ENCODE measurements at regions of chr19 and their contacts with region 1.

Region 1: GRCh38 chr19:50368649-50369570 is 3.5 kb upstream of the NAPSA start:
- DNase-seq: peak; percentile 92
- ATAC-seq: peak; percentile 95

Region 2: DNA sequence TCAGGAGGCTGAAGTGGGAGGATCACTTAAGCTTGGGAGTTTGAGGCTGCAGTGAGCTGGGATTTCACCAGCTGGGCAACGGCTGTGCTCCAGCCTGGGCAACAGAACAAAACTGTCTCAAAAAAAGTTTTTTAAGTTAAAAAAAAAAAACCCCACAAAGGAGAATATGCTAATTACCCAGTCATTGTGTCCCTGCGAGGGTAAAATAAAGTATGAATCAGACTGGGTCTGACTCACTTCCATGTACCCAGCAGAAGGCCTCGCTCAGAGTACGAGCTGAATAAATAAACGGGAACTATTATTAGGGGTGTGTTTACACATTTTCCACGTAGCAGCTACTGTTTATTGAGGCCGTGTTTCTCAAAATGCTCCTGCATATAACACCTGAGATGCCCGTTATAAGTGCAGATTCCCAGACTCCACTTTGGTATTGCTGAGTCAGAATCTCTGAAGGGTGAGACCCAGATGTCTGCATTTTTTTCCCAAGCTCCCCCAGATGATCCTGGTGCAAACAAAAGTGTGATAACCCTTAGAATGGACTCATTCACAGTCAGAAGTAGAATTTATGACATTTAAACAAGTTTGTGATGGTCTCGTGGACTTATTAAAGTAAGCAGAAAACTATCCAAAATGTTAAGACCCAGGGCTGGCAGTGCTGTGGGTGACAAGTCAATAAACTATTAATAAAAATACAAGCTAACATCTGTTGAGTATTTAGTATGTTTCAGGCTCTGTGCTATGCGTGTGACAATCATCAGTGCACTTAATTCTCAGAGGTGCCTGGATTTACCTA is 67.9 kb before region 1 on chr19:
- intact Hi-C with region 1: no loop called
- DNase-seq: no peak
- ATAC-seq: no peak

Region 3: DNA sequence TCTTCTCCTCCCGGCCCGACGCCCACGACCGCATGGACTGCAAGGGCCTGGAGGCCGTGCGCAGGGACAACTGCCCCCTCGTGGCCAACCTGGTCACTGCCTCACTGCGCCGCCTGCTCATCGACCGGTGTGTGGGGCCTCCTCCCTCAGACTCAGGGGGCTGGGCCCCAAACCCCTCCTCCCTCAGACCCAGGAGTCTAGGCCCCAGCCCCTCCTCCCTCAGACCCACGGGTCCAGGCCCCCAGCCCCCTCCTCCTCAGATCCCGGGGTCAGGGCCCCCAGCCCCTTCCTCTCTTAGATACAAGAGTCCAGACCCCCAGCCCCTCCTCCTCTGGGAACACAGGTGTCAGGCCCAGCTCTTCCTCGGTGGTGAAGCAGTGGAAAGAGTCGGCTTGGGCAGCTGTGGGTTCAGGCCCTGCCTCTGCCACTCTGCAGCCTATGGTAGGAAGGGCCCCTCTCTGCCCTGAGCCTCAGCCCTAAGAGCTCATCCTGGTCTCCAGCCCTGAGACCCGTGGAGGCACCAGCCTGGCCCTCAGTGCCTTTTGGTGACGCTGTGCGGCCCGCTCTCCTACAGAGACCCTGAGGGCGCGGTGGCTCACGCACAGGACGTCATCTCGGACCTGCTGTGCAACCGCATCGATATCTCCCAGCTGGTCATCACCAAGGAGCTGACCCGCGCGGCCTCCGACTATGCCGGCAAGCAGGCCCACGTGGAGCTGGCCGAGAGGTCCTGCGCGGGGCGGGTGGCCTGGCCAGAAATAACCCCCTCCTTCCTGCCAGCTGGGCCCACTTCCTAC is 46.2 kb after region 1 on chr19:
- intact Hi-C with region 1: loop called (anchors 2 kb)
- DNase-seq: peak; percentile 90
- ATAC-seq: peak; percentile 65

Region 4: DNA sequence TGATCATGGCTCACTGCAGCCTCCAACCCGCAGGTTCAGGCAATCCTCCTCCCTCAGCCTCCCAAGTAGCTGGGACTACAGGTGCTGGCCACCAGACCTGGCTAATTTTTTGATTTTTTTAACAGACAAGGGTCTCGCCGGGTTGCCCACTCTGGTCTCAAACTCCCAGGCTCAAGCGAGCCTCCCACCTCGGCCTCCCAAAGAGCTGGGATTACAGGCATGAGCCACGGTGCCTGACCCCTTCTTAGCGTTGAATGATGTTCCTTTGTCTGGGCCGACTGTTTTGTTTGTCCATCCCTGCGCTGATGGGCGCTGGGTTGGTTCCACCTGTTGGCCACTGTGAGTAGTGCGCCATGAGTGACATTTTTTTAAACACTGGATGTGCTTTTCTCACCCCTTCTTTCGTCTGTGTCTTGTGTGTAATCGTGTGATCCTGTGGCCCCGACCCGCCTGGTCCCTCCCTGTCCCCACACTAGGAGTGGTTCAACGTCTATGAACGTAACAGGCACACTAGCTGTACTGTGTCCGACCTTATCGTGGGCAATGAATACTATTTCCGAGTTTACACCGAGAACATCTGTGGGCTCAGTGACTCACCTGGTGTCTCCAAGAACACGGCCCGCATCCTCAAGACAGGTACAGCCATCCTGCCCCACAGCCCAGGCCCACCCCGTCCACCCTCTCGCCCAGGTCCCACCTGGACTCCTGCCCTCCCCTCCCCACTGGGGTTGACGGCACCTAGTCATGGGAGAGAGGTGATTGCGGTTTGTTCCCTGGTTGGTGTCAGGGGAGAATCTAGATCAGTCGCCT is 92.4 kb after region 1 on chr19:
- intact Hi-C with region 1: loop called (anchors 1 kb)
- DNase-seq: no peak
- ATAC-seq: peak; percentile 80

Region 5: GRCh38 chr19:50922317-50922853 is 553.5 kb after region 1 on chr19:
- intact Hi-C with region 1: loop called (anchors 10 kb)
- DNase-seq: no peak
- ATAC-seq: peak; percentile 87